Activated T-helper 1 cell treated with anti-CD3 and anti-CD28 coated beads, Interleukin-12 subunit alpha, Interleukin-12 subunit beta, Interleukin-2, Interleukin-4 antibody, amounts not matched to agents 30 ng/mL and 10 ng/mL and 1 ng/mL, durations not matched to agents 14 hours and 24 hours and 36 hours (primary cell): ENCODE measurements at regions of chr3 and their contacts with region 1.

Region 1: DNA sequence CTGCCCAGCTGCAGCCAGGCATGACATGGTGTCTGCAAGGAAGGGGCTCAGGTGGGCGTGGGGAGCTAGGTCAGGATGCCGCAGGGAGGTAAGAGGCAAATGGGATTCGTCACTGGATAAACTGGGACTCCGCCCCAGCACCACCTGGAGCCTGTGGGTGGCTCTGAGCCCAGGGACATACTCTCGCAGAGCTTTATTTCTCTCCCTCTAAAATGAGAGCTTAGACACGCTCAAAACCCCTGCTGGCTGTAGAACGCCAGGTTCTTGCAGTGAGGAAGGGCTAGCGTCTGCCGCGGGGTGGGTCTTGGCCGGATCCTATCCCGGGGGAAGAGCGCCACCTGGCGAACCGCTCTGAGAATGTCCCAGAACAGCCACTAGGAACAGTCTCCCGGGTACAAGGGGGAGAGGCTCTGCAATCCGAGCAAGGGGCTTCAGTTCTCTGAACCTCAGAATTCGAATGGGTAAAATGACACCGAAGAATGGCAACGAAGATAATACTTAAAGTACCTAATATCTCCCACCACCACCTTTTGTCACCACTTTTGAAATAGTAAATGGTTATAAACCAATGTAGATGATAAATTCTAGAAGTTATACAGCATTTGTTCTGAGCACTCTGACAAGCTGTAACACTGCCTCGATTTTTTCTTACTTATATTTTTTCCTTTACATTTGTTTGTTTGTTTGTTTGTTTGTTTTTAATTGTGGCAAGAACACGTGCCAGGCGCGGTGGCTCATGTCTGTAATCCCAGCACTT is 53.2 kb upstream of the SRGAP3 start:
- DNase-seq: peak; percentile 63
- H3K4me3 Mint-ChIP-seq: no peak overlapping the region
- H3K27ac Mint-ChIP-seq: no peak overlapping the region
- H3K4me1 Mint-ChIP-seq: peaks cover 5% of the 10 kb centered on the region
- H3K27me3 Mint-ChIP-seq: peaks cover 3% of the 10 kb centered on the region

Region 2: GRCh38 chr3:8769088-8769822 is 533.3 kb before region 1 on chr3 and contains the start of gene OXTR:
- intact Hi-C with region 1: loop called (anchors 1 kb)
- DNase-seq: peak; percentile 49
- H3K4me3 Mint-ChIP-seq: peak within 1 kb of the TSS; percentile 55
- H3K27ac Mint-ChIP-seq: peak within 1 kb of the TSS; percentile 22
- H3K4me1 Mint-ChIP-seq: peaks cover 13% of the 10 kb centered on the region
- H3K27me3 Mint-ChIP-seq: peaks cover 42% of the 10 kb centered on the region
- total RNA-seq, gene OXTR: 1.0 and 1.2 TPM in 2 replicates

Region 3: DNA sequence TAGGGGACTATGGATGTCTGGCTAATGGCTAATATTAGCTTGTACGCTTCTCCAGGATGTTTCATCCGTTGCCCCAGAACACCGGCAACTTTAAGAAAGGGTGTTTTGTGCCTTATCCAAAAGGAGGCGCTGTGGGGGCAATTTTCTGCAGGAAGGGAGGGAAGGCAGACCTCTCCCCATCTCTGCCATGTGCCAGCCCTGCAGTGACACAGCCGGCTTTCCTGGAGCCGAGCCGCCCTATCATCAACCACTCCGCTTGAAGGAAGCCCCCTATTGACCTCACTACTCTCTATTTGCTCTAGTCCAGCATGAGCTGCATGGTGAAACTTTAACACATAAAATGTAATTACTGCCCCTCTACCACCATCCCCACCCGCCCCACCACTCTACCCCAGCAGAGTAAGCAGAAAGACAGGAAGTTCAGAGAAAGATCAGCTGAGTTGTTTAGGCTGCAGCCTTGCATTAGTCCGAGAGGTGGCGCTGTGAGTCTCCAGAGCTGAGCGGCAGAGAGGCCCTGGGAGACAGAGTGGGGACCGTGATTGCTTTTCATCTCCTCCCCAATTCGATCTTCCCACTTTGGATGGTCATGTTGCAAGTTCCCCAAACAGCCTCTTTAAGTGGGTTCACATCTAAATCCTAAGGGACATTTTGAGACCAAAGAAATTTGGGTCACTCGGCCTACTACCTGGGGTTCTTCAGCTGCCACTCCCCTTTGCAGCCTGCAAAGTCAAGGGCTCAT is 314.8 kb before region 1 on chr3:
- intact Hi-C with region 1: loop called (anchors 1 kb)
- DNase-seq: peak; percentile 38
- H3K4me3 Mint-ChIP-seq: no peak overlapping the region
- H3K27ac Mint-ChIP-seq: no peak overlapping the region
- H3K4me1 Mint-ChIP-seq: no peaks in the 10 kb centered on the region
- H3K27me3 Mint-ChIP-seq: peaks cover 3% of the 10 kb centered on the region

Region 4: DNA sequence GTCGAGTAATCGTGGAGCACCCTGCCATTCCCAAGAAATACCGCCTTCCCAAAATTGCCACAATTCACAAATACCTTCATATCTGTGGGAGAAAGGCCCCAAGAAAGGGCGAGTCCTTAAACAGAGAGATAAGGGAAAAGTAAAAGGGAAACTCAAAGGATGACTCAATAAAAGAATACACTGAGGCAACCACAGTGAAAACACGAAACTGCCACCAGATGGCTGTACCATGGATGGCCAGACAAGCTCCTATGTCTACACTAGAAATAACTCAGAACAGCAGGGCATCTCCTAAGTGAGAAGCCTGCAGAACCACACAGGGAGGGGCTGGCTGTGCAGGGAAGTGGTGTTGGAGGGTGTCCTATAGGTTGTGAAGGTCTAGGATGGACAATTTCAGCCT is 78.1 kb before region 1 on chr3:
- intact Hi-C with region 1: loop called (anchors 1 kb)
- DNase-seq: peak; percentile 2
- H3K4me3 Mint-ChIP-seq: no peak overlapping the region
- H3K27ac Mint-ChIP-seq: no peak overlapping the region
- H3K4me1 Mint-ChIP-seq: peaks cover 32% of the 10 kb centered on the region
- H3K27me3 Mint-ChIP-seq: peaks cover 14% of the 10 kb centered on the region

Region 5: DNA sequence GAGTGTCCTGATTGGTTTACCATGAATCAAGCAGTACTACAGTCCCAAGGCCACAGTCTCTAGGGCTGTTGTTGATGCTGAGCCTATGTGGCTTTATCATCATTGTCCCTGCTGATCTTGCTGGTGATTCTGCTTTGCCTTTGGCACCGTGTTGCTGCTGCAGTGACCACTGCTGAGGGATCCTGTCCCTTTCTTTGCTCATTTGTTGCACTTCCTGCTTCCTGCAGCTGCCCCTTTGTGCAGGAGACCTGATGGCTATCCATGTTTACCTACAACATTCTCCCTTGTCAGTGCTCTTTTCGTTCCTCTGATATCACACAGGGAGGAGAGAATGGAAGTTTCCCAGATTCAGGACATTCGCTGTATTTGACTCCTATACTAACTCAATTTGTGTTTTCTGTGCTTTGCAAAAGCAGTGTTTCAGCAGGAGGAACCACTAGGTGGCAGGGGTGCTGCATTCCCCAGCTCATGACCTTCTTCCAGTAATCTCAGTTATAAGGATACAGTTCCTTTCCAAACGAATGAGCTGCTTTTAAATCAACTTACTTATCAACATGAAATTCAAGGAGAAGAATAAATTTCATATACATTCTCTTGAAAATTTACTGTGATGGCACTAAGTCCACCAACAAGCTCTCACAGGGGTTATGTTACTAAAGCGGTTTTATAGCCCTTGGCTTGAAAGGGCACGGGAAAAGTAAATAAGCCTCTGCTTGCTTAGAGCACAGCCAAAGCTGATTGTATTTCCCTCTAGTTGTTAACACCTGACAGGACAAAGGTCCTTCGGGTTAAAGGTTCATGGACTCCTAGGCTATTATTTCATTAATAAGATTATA is 50.5 kb after region 1 on chr3:
- intact Hi-C with region 1: no loop called
- DNase-seq: peak; percentile 39
- H3K4me3 Mint-ChIP-seq: no peak overlapping the region
- H3K27ac Mint-ChIP-seq: no peak overlapping the region
- H3K4me1 Mint-ChIP-seq: peaks cover 20% of the 10 kb centered on the region
- H3K27me3 Mint-ChIP-seq: no peaks in the 10 kb centered on the region